ENCODE measurements at regions of chr19 and their contacts with region 1.

Region 1: DNA sequence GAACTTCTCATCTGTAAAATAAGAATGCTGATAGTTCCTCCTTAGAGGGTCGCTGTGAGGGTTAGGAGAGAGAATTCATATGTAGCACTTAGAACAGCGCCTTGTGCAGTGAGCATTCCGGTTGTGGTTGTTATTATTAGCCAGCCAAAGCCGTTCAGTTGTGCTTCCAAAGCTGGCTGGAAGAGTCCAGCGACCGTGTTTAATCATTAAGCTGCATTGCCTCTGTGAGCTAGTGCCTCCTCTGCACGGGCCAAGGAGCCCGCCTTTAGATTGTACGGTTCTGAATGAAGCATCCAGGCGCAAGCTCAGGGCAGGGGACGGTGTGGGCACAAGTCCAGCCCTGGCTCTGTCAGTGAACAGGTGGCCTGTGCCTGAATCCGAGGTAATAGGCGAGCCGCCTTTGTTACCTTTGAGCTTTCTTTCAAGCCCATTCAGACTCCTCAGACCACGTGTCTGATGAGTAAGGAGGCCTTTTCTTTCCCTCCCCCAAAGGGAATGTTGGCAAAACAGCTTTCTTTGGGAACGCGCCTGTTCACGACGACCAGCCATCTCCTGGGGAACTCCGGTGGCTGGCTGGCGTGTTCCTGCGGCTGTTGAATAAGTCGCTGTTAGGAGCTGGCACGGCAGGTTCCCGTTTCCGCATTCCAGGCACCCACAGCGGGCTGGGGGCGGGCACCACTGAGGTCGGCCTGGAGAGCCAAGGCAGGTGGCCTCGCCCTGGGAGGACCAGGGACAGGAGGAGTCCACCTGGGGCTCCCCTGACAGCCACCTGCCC is 25.1 kb downstream of the SIPA1L3 start:
- DNase-seq: peak; percentile 72
- ATAC-seq: peak; percentile 6
- H3K4me3 ChIP-seq: peak overlapping the region; percentile 21 to 63 (median 55)
- H3K4me3 Mint-ChIP-seq: peak overlapping the region; percentile 85
- H3K27ac ChIP-seq: peak overlapping the region; percentile 78 to 85
- H3K27ac Mint-ChIP-seq: peak overlapping the region; percentile 87
- H3K4me1 ChIP-seq: peaks cover 86 to 95% of the 10 kb centered on the region in 2 donors
- H3K4me1 Mint-ChIP-seq: peaks cover 90% of the 10 kb centered on the region
- H3K27me3 ChIP-seq: no peaks in the 10 kb centered on the region
- H3K27me3 Mint-ChIP-seq: no peaks in the 10 kb centered on the region
- CTCF ChIP-seq: no peak

Region 2: DNA sequence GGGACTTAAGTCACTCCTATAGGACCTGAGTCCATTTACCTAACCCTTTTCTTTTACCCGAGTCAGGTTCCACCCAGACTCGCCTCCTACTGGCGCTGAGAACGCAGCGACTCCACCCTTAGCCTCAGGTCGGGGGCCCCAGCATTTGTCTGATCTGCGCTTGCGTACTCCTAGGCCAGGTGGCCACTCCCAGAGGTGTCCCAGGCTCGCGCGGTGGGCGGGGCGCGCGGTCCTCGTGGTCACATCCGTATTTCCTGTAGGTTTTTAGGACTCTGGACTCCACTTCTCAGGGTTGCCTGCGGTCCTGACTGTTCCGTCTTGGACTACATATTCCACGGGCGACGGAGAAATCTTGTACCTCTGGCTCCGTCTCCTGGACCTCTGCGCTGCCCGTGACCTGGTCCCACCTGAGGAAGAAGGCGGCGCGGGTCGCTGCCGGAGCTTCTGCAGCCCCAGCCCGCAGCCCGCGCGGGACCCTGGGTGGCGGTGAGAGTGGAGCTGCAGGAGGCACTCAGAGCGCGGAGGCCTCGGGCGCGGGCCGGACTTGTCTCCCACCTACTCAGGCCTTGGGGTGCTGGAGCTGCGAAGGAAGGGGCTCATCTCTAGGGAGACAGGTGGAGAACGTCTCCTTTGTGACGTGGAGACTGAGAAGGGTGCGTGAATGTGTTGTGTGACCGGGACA is 141.7 kb before region 1 on chr19:
- CTCF ChIA-PET with region 1: no interaction called
- POLR2A ChIA-PET with region 1: no interaction called
- intact Hi-C with region 1: no loop called
- DNase-seq: no peak
- ATAC-seq: no peak
- H3K4me3 ChIP-seq: no peak overlapping the region
- H3K4me3 Mint-ChIP-seq: no peak overlapping the region
- H3K27ac ChIP-seq: no peak overlapping the region
- H3K27ac Mint-ChIP-seq: no peak overlapping the region
- H3K4me1 ChIP-seq: no peaks in the 10 kb centered on the region
- H3K4me1 Mint-ChIP-seq: no peaks in the 10 kb centered on the region
- H3K27me3 ChIP-seq: no peaks in the 10 kb centered on the region
- H3K27me3 Mint-ChIP-seq: no peaks in the 10 kb centered on the region
- CTCF ChIP-seq: no peak

Region 3: GRCh38 chr19:37893845-37894575 is 38.1 kb before region 1 on chr19:
- CTCF ChIA-PET with region 1: no interaction called
- POLR2A ChIA-PET with region 1: no interaction called
- intact Hi-C with region 1: no loop called
- DNase-seq: no peak
- ATAC-seq: no peak
- H3K4me3 ChIP-seq: no peak overlapping the region
- H3K4me3 Mint-ChIP-seq: no peak overlapping the region
- H3K27ac ChIP-seq: no peak overlapping the region
- H3K27ac Mint-ChIP-seq: no peak overlapping the region
- H3K4me1 ChIP-seq: peaks cover 4 to 6% of the 10 kb centered on the region in 2 donors
- H3K4me1 Mint-ChIP-seq: peaks cover 7% of the 10 kb centered on the region
- H3K27me3 ChIP-seq: peaks cover 0 to 16% (median 3%) of the 10 kb centered on the region in 4 experiments
- H3K27me3 Mint-ChIP-seq: peaks cover 16% of the 10 kb centered on the region
- CTCF ChIP-seq: no peak

Region 4: GRCh38 chr19:37957176-37957575 is 25.1 kb after region 1 on chr19:
- CTCF ChIA-PET with region 1: no interaction called
- POLR2A ChIA-PET with region 1: interaction called, 10 read pairs
- intact Hi-C with region 1: loop called (anchors 2 kb)
- DNase-seq: no peak
- ATAC-seq: no peak
- H3K4me3 ChIP-seq: no peak overlapping the region
- H3K4me3 Mint-ChIP-seq: peak overlapping the region; percentile 6
- H3K27ac ChIP-seq: peak overlapping the region; percentile 8 to 77
- H3K27ac Mint-ChIP-seq: peak overlapping the region; percentile 5
- H3K4me1 ChIP-seq: peaks cover 77 to 89% of the 10 kb centered on the region in 2 donors
- H3K4me1 Mint-ChIP-seq: peaks cover 68% of the 10 kb centered on the region
- H3K27me3 ChIP-seq: no peaks in the 10 kb centered on the region
- H3K27me3 Mint-ChIP-seq: no peaks in the 10 kb centered on the region
- CTCF ChIP-seq: no peak

Region 5: GRCh38 chr19:37979547-37980082 is 47.5 kb after region 1 on chr19:
- CTCF ChIA-PET with region 1: interaction called, 4 read pairs
- POLR2A ChIA-PET with region 1: interaction called, 5 read pairs
- intact Hi-C with region 1: loop called (anchors 2 kb)
- DNase-seq: peak; percentile 66
- ATAC-seq: no peak
- H3K4me3 ChIP-seq: peak overlapping the region in 2 of 5 experiments; percentile 19 to 45
- H3K4me3 Mint-ChIP-seq: peak overlapping the region; percentile 65
- H3K27ac ChIP-seq: peak overlapping the region; percentile 89 to 92
- H3K27ac Mint-ChIP-seq: peak overlapping the region; percentile 94
- H3K4me1 ChIP-seq: peaks cover 79 to 99% of the 10 kb centered on the region in 2 donors
- H3K4me1 Mint-ChIP-seq: peaks cover 87% of the 10 kb centered on the region
- H3K27me3 ChIP-seq: no peaks in the 10 kb centered on the region
- H3K27me3 Mint-ChIP-seq: no peaks in the 10 kb centered on the region
- CTCF ChIP-seq: no peak

Region 6: GRCh38 chr19:38004521-38005223 is 72.6 kb after region 1 on chr19:
- CTCF ChIA-PET with region 1: interaction called, 11 read pairs
- POLR2A ChIA-PET with region 1: interaction called, 5 read pairs
- intact Hi-C with region 1: loop called (anchors 2 kb)
- DNase-seq: peak; percentile 79
- ATAC-seq: peak; percentile 45
- H3K4me3 ChIP-seq: peak overlapping the region in 4 of 5 experiments; percentile 5 to 55 (median 50)
- H3K4me3 Mint-ChIP-seq: no peak overlapping the region
- H3K27ac ChIP-seq: peak overlapping the region; percentile 85 to 92
- H3K27ac Mint-ChIP-seq: no peak overlapping the region
- H3K4me1 ChIP-seq: peaks cover 73 to 83% of the 10 kb centered on the region in 2 donors
- H3K4me1 Mint-ChIP-seq: peaks cover 35% of the 10 kb centered on the region
- H3K27me3 ChIP-seq: no peaks in the 10 kb centered on the region
- H3K27me3 Mint-ChIP-seq: no peaks in the 10 kb centered on the region
- CTCF ChIP-seq: no peak

Region 7: GRCh38 chr19:38064661-38065425 is 132.8 kb after region 1 on chr19:
- CTCF ChIA-PET with region 1: no interaction called
- POLR2A ChIA-PET with region 1: no interaction called
- intact Hi-C with region 1: no loop called
- DNase-seq: no peak
- ATAC-seq: no peak
- H3K4me3 ChIP-seq: no peak overlapping the region
- H3K4me3 Mint-ChIP-seq: no peak overlapping the region
- H3K27ac ChIP-seq: no peak overlapping the region
- H3K27ac Mint-ChIP-seq: peak overlapping the region; percentile 76
- H3K4me1 ChIP-seq: peaks cover 6 to 29% of the 10 kb centered on the region in 2 donors
- H3K4me1 Mint-ChIP-seq: peaks cover 38% of the 10 kb centered on the region
- H3K27me3 ChIP-seq: no peaks in the 10 kb centered on the region
- H3K27me3 Mint-ChIP-seq: no peaks in the 10 kb centered on the region
- CTCF ChIP-seq: no peak

Region 8: GRCh38 chr19:38250821-38251563 is 318.9 kb after region 1 on chr19:
- CTCF ChIA-PET with region 1: no interaction called
- POLR2A ChIA-PET with region 1: interaction called, 10 read pairs
- intact Hi-C with region 1: no loop called
- DNase-seq: no peak
- ATAC-seq: no peak
- H3K4me3 ChIP-seq: no peak overlapping the region
- H3K4me3 Mint-ChIP-seq: peak overlapping the region; percentile 69
- H3K27ac ChIP-seq: no peak overlapping the region
- H3K27ac Mint-ChIP-seq: peak overlapping the region; percentile 91
- H3K4me1 ChIP-seq: peaks cover 48 to 51% of the 10 kb centered on the region in 2 donors
- H3K4me1 Mint-ChIP-seq: peaks cover 53% of the 10 kb centered on the region
- H3K27me3 ChIP-seq: no peaks in the 10 kb centered on the region
- H3K27me3 Mint-ChIP-seq: no peaks in the 10 kb centered on the region
- CTCF ChIP-seq: no peak